ENCODE measurements at regions of chr16 and their contacts with region 1.

Region 1: GRCh38 chr16:88785106-88785924 is at the start of gene PIEZO1:
- DNase-seq: peak; percentile 78 to 84 (median 83)
- ATAC-seq: peak; percentile 46 to 67 (median 64)
- H3K4me3 ChIP-seq: peak within 1 kb of the TSS; percentile 74 to 82 (median 78)
- H3K27ac ChIP-seq: peak within 1 kb of the TSS; percentile 84 to 89 (median 87)
- H3K4me1 ChIP-seq: peaks cover 0 to 47% (median 25%) of the 10 kb centered on the region in 4 donors
- H3K27me3 ChIP-seq: no peaks in the 10 kb centered on the region
- CTCF ChIP-seq: peak; percentile 84 to 94 (median 92)
- POLR2A ChIP-seq: peak; percentile 88
- total RNA-seq, gene PIEZO1: 48.9 to 91.9 (median 64.4) TPM

Region 2: GRCh38 chr16:88743693-88744576 is 41.4 kb before region 1 on chr16:
- intact Hi-C with region 1: loop called in 1 of 2 experiments (anchors 5 kb)
- DNase-seq: peak; percentile 82 to 83 (median 82)
- ATAC-seq: peak; percentile 74 to 86 (median 82)
- H3K4me3 ChIP-seq: no peak overlapping the region
- H3K27ac ChIP-seq: no peak overlapping the region
- H3K4me1 ChIP-seq: peaks cover 0 to 6% (median 3%) of the 10 kb centered on the region in 4 donors
- H3K27me3 ChIP-seq: no peaks in the 10 kb centered on the region
- CTCF ChIP-seq: peak; percentile 74 to 92 (median 87)
- POLR2A ChIP-seq: no peak